ENCODE measurements at regions of chr9 and their contacts with region 1.

Region 1: DNA sequence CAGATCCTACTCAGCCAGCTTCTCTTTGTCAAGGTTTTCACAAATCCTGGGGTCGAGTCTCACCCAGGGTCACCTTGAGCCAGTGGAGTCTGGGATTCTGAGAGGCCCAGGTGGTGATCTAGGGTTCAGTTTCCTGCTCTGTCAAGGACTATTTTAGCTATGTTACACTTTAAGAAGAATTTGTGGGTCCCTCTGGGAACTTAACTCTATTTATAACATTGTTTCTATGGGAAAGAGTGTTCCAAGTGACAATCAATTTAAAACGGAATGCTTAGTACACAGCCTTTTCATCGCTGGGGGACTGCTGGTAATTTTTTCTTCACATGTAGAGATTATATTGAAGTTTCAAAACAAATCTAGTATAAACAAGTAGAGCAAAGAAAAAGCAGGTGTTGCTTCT is 26.9 kb upstream of the TMEM252 start:
- DNase-seq: no peak
- ATAC-seq: no peak
- H3K4me3 ChIP-seq: no peak overlapping the region
- H3K27ac ChIP-seq: no peak overlapping the region
- H3K4me1 ChIP-seq: no peaks in the 10 kb centered on the region
- H3K27me3 ChIP-seq: peaks cover 4 to 8% of the 10 kb centered on the region in 2 experiments
- CTCF ChIP-seq: no peak
- EP300 ChIP-seq: no peak
- POLR2A ChIP-seq: no peak
- RAD21 ChIP-seq: no peak

Region 2: DNA sequence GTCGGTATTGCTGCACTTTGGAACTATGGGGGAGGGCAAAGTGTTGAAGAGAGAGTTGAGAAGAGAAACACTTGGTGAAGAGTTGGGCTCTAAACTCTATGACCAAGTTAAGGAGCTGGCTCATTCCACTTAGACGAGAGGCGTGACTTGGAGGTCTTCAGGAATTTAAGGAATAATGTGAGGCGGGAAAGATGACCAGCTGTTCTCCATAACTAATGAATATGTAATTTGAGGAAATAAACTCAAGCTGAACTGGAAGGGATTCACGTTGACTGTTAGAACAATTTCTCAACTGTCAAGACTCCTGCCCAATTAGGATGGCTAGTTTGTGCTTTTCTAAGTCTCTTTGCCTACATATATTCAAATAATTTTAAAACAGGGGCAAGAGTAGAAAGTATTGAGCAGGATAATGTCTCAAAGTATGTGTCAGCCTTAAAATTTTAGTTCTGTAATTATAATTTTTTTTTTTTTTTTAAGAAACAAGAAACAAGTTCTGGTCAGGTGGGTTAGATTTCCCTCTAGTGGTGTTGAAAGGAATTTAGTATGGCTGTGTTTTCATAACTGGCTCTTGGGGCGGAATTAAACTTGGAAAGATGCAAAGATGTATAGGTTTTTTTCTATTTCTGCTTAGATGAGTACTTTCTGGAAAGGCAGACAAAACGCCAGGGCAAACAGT is 60.3 kb before region 1 on chr9:
- CTCF ChIA-PET with region 1: interaction called, 11 read pairs
- POLR2A ChIA-PET with region 1: no interaction called
- RAD21 ChIA-PET with region 1: no interaction called
- SMC1A ChIA-PET with region 1: interaction called, 4 read pairs
- in situ Hi-C with region 1: loop called (anchors 5 kb)
- intact Hi-C with region 1: loop called (anchors 5 kb)
- DNase-seq: no peak
- ATAC-seq: peak; percentile 39; the same call in 2 of the 3 replicates
- H3K4me3 ChIP-seq: no peak overlapping the region
- H3K27ac ChIP-seq: no peak overlapping the region
- H3K4me1 ChIP-seq: peaks cover 3% of the 10 kb centered on the region; the same call in 1 of the 2 replicates
- H3K27me3 ChIP-seq: no peaks in the 10 kb centered on the region; a peak in 1 of 4 replicates
- CTCF ChIP-seq: peak; percentile 36 to 53 (median 50); a peak in 5 of 6 replicates
- EP300 ChIP-seq: no peak
- POLR2A ChIP-seq: no peak
- RAD21 ChIP-seq: peak; percentile 52

Region 3: DNA sequence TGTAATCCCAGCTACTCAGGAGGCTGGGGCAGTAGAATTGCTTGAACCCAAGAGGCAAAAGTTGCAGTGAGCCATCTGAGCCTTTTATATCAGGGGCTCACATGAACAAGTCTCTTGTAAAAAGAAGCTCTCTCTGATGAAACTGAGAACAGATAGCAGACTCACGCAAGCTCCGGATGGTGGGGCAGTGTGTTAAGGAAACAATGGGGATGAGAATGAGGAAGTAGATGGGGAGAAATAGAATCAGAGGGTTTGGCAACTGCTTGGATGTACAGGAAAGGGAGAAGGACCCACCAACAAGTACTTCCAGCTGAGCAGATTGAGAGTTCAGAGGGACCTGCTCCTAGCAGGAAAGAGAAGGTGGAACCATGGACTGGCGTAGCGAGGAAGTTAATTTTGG is 45.4 kb before region 1 on chr9:
- CTCF ChIA-PET with region 1: no interaction called
- POLR2A ChIA-PET with region 1: no interaction called
- RAD21 ChIA-PET with region 1: no interaction called
- SMC1A ChIA-PET with region 1: no interaction called
- in situ Hi-C with region 1: no loop called
- intact Hi-C with region 1: no loop called
- DNase-seq: no peak
- ATAC-seq: no peak
- H3K4me3 ChIP-seq: no peak overlapping the region
- H3K27ac ChIP-seq: no peak overlapping the region
- H3K4me1 ChIP-seq: no peaks in the 10 kb centered on the region
- H3K27me3 ChIP-seq: no peaks in the 10 kb centered on the region; a peak in 1 of 4 replicates
- CTCF ChIP-seq: no peak
- EP300 ChIP-seq: no peak
- POLR2A ChIP-seq: no peak
- RAD21 ChIP-seq: no peak

Region 4: GRCh38 chr9:68577774-68578591 is 10.4 kb after region 1 on chr9:
- CTCF ChIA-PET with region 1: interaction called, 60 read pairs
- POLR2A ChIA-PET with region 1: interaction called, 3 read pairs
- RAD21 ChIA-PET with region 1: interaction called, 6 read pairs
- SMC1A ChIA-PET with region 1: interaction called, 4 read pairs
- in situ Hi-C with region 1: no loop called
- intact Hi-C with region 1: no loop called
- DNase-seq: peak; percentile 68
- ATAC-seq: peak; percentile 94
- H3K4me3 ChIP-seq: 0 out of 2 replicates have a peak overlapping the region, but pooled peaks have one; percentile 3
- H3K27ac ChIP-seq: peak overlapping the region; percentile 33; the same call in 1 of the 2 replicates
- H3K4me1 ChIP-seq: peaks cover 26% of the 10 kb centered on the region
- H3K27me3 ChIP-seq: no peaks in the 10 kb centered on the region
- CTCF ChIP-seq: no peak
- EP300 ChIP-seq: peak in 1 of 2 experiments; percentile 58
- POLR2A ChIP-seq: no peak
- RAD21 ChIP-seq: no peak

Region 5: DNA sequence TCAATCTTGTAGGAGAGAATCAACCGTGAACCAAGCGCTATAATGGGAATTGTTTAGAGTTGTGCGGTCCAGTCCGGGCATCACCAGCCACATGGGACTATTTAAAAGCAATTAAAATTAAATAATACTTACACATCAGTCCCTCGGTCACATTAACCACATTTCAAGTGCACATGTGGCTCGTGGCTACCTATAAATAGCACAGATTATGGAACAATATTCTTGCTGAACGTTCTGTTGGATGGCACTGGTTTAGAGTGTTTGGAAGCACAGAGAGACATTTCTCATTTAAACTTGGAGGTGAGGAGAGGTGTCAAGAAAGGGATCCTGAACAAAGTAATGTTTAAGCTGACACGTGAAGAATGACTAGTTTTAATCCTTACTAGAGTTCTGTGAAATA is 125.0 kb after region 1 on chr9:
- CTCF ChIA-PET with region 1: no interaction called
- POLR2A ChIA-PET with region 1: no interaction called
- RAD21 ChIA-PET with region 1: no interaction called
- SMC1A ChIA-PET with region 1: no interaction called
- in situ Hi-C with region 1: no loop called
- intact Hi-C with region 1: no loop called
- DNase-seq: no peak
- ATAC-seq: no peak
- H3K4me3 ChIP-seq: no peak overlapping the region
- H3K27ac ChIP-seq: no peak overlapping the region
- H3K4me1 ChIP-seq: no peaks in the 10 kb centered on the region
- H3K27me3 ChIP-seq: no peaks in the 10 kb centered on the region
- CTCF ChIP-seq: no peak
- EP300 ChIP-seq: no peak
- POLR2A ChIP-seq: no peak
- RAD21 ChIP-seq: no peak

Region 6: DNA sequence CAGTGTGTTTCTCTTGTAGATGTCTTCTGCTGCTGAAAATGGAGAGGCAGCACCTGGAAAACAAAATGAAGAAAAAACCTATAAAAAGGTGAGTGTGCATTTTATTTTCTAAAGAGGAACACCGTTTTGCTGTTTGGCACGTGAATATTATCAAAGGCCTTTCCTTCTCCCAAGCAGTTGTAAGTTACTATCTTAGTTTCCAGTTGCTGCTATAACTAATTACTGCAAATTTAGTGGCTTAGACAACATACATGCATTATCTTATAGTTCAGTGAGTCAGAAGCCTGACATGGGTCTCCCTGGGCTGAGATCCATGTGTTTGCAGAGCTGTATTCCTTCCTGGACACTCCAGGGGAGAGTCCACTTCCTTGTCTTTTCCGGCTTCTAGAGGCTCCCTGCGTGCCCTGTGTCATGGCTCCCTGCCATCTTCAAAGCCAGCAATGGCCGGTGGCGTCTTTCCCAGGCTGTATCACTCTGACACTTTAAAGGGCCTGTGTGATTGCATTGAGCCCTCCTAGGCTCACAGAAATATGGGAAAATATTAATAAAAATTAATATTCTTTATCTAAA is 255.1 kb after region 1 on chr9:
- CTCF ChIA-PET with region 1: no interaction called
- POLR2A ChIA-PET with region 1: no interaction called
- RAD21 ChIA-PET with region 1: no interaction called
- SMC1A ChIA-PET with region 1: no interaction called
- in situ Hi-C with region 1: no loop called
- intact Hi-C with region 1: no loop called
- DNase-seq: no peak
- ATAC-seq: no peak
- H3K4me3 ChIP-seq: no peak overlapping the region
- H3K27ac ChIP-seq: no peak overlapping the region
- H3K4me1 ChIP-seq: no peaks in the 10 kb centered on the region
- H3K27me3 ChIP-seq: no peaks in the 10 kb centered on the region; a peak in 1 of 4 replicates
- CTCF ChIP-seq: no peak
- EP300 ChIP-seq: no peak
- POLR2A ChIP-seq: no peak
- RAD21 ChIP-seq: no peak